ENCODE measurements at regions of chr5 and their contacts with region 1.

Region 1: GRCh38 chr5:68419637-68420452 is 204.3 kb downstream of the PIK3R1 start:
- DNase-seq: peak; percentile 73 to 88 (median 74)
- ATAC-seq: peak; percentile 72
- H3K4me3 ChIP-seq: no peak overlapping the region
- H3K27ac ChIP-seq: peak overlapping the region; percentile 90
- H3K4me1 ChIP-seq: peaks cover 41 to 82% of the 10 kb centered on the region in 2 experiments
- H3K27me3 ChIP-seq: no peaks in the 10 kb centered on the region
- CTCF ChIP-seq: no peak
- EP300 ChIP-seq: peak; percentile 69; the same call in 1 of the 2 replicates
- POLR2A ChIP-seq: no peak
- RAD21 ChIP-seq: no peak

Region 2: DNA sequence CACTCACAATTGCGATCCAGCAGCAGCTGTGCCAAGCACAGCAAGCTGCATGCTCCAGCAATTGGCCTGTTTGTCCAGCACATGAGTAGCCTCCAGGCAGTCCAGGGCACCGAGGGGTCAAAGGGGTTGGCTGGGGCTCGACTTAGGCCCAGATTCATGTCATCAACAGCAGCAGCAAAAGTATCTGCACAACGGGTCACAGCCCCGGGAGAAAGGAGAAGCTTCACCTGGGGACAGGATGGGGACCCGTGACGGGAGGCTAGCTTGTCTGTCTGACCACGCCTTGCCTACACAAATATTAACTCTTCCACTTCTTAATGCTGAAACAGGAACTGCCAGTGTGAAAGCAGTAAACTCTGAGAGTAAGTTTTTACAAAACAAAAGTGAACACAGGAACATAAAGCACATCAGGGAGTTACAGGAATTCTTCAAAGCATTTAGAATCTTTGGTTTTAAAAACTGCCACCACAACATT is 13.0 kb before region 1 on chr5:
- CTCF ChIA-PET with region 1: no interaction called
- POLR2A ChIA-PET with region 1: interaction called, 24 read pairs
- in situ Hi-C with region 1: no loop called
- intact Hi-C with region 1: no loop called
- DNase-seq: peak; percentile 24 to 39 (median 29)
- ATAC-seq: peak; percentile 57
- H3K4me3 ChIP-seq: no peak overlapping the region
- H3K27ac ChIP-seq: peak overlapping the region; percentile 42; the same call in 2 of the 3 replicates
- H3K4me1 ChIP-seq: peaks cover 24 to 49% of the 10 kb centered on the region in 2 experiments
- H3K27me3 ChIP-seq: no peaks in the 10 kb centered on the region
- CTCF ChIP-seq: no peak
- EP300 ChIP-seq: no peak
- POLR2A ChIP-seq: no peak
- RAD21 ChIP-seq: no peak

Measured in K562 (cell line).